Naive thymus-derived CD4-positive, alpha-beta T cell (primary cell): ENCODE measurements at regions of chr9 and their contacts with region 1.

Region 1: GRCh38 chr9:77521091-77521490 is 127.0 kb downstream of the GNA14 start:
- DNase-seq: no peak
- ATAC-seq: no peak
- H3K4me3 ChIP-seq: no peak overlapping the region
- H3K4me3 Mint-ChIP-seq: no peak overlapping the region
- H3K27ac ChIP-seq: no peak overlapping the region
- H3K27ac Mint-ChIP-seq: no peak overlapping the region
- H3K4me1 ChIP-seq: no peaks in the 10 kb centered on the region
- H3K4me1 Mint-ChIP-seq: no peaks in the 10 kb centered on the region
- H3K27me3 ChIP-seq: no peaks in the 10 kb centered on the region
- H3K27me3 Mint-ChIP-seq: peaks cover 0 to 8% (median 0%) of the 10 kb centered on the region in 5 donors

Region 2: GRCh38 chr9:77498891-77499290 is 22.2 kb before region 1 on chr9:
- CTCF ChIA-PET with region 1: no interaction called
- POLR2A ChIA-PET with region 1: no interaction called
- intact Hi-C with region 1: loop called in 1 of 2 experiments (anchors 1 kb)
- DNase-seq: no peak
- ATAC-seq: no peak
- H3K4me3 ChIP-seq: no peak overlapping the region
- H3K4me3 Mint-ChIP-seq: no peak overlapping the region
- H3K27ac ChIP-seq: no peak overlapping the region
- H3K27ac Mint-ChIP-seq: no peak overlapping the region
- H3K4me1 ChIP-seq: no peaks in the 10 kb centered on the region
- H3K4me1 Mint-ChIP-seq: peaks cover 0 to 2% (median 0%) of the 10 kb centered on the region in 7 donors
- H3K27me3 ChIP-seq: no peaks in the 10 kb centered on the region
- H3K27me3 Mint-ChIP-seq: peaks cover 0 to 15% (median 4%) of the 10 kb centered on the region in 5 donors

Region 3: DNA sequence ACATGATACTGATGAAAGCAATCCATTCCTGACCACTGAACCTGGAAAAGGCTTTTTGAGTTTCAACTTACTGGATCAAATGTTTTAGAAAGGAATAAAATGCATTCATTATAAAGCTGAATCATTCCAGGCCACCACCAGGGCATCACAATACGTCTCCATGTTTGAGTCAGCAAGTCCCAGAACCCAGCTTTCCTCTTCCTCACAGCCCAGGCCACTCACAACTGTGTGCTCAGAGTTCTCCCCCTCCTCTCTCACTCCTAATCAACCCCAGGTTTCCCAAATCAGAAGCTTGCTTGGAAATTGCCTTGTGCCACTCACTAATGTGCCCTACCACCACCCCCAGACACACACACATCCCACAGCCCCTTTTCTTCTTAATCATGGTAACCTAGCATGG is 35.3 kb after region 1 on chr9:
- CTCF ChIA-PET with region 1: no interaction called
- POLR2A ChIA-PET with region 1: no interaction called
- intact Hi-C with region 1: no loop called
- DNase-seq: no peak
- ATAC-seq: no peak
- H3K4me3 ChIP-seq: no peak overlapping the region
- H3K4me3 Mint-ChIP-seq: no peak overlapping the region
- H3K27ac ChIP-seq: no peak overlapping the region
- H3K27ac Mint-ChIP-seq: no peak overlapping the region
- H3K4me1 ChIP-seq: no peaks in the 10 kb centered on the region
- H3K4me1 Mint-ChIP-seq: no peaks in the 10 kb centered on the region
- H3K27me3 ChIP-seq: no peaks in the 10 kb centered on the region
- H3K27me3 Mint-ChIP-seq: peaks cover 0 to 10% (median 4%) of the 10 kb centered on the region in 5 donors